ENCODE measurements at regions of chr17 and their contacts with region 1.

Region 1: DNA sequence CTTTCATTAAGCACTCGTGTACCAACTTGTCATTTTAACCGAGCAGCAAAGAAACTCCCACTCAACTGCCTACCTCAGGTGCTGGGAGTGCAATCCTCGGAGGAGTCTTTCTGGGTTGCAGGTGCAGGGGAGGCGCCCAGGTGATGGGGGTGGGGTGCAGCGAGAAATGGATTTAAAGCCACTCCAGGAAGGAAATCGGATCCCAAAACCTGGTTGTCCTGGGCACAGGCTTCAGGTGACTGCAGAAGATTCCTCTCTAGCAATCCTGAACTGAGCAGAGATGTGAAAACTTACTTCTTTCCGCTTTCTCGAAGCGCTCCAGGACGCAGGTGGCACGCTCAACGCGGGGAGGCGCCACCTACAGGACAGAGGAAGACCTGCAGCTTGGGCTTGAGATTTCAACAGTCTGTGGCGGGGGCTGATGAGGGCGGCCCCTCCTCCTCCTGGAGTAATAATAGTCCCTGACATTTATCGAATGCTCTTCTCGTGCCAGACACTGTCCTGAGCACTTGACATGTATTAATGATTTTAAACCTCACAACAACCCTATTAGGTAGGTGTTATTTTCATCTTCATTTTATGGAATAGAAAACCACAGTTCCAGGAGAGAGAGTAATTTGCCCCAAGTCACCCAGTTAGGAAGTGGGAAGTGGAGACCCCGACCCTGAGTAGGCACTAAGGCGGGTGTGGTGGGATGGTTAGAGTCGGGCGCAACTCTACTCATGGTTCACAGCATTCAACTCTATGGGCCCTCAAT is 27.2 kb upstream of the SKAP1 start:
- DNase-seq: peak; percentile 84
- H3K4me3 Mint-ChIP-seq: peak overlapping the region; percentile 54
- H3K27ac Mint-ChIP-seq: peak overlapping the region; percentile 38
- H3K4me1 Mint-ChIP-seq: peaks cover 60% of the 10 kb centered on the region
- H3K27me3 Mint-ChIP-seq: no peaks in the 10 kb centered on the region

Region 2: GRCh38 chr17:48175692-48176470 is 281.4 kb before region 1 on chr17:
- CTCF ChIA-PET with region 1: no interaction called
- POLR2A ChIA-PET with region 1: no interaction called
- intact Hi-C with region 1: no loop called
- DNase-seq: no peak
- H3K4me3 Mint-ChIP-seq: no peak overlapping the region
- H3K27ac Mint-ChIP-seq: no peak overlapping the region
- H3K4me1 Mint-ChIP-seq: peaks cover 41% of the 10 kb centered on the region
- H3K27me3 Mint-ChIP-seq: no peaks in the 10 kb centered on the region

Region 3: GRCh38 chr17:48335858-48336500 is 121.3 kb before region 1 on chr17:
- CTCF ChIA-PET with region 1: interaction called, 23 read pairs
- POLR2A ChIA-PET with region 1: no interaction called
- intact Hi-C with region 1: loop called (anchors 5 kb)
- DNase-seq: no peak
- H3K4me3 Mint-ChIP-seq: no peak overlapping the region
- H3K27ac Mint-ChIP-seq: no peak overlapping the region
- H3K4me1 Mint-ChIP-seq: peaks cover 8% of the 10 kb centered on the region
- H3K27me3 Mint-ChIP-seq: no peaks in the 10 kb centered on the region

Region 4: DNA sequence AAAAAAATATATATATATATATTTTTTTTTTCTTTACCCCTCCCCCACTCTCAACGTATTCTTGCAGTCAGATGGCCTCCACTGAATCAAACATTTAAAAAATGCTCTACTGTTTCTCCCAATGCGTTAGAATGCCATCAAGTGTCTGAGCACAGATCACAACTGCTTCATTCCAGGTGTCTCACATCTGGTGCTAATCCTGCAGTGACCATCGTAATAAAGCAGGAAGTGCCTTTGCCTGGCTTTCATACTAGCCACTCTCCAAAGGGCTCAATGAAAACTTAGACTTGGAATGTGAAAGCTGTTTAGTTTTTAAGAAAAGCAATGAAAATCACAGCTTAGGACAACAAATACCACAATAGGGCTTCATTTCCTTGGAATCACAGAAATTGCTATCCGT is 64.4 kb before region 1 on chr17:
- CTCF ChIA-PET with region 1: interaction called, 4 read pairs
- POLR2A ChIA-PET with region 1: interaction called, 3 read pairs
- intact Hi-C with region 1: loop called (anchors 2 kb)
- DNase-seq: no peak
- H3K4me3 Mint-ChIP-seq: no peak overlapping the region
- H3K27ac Mint-ChIP-seq: no peak overlapping the region
- H3K4me1 Mint-ChIP-seq: peaks cover 45% of the 10 kb centered on the region
- H3K27me3 Mint-ChIP-seq: no peaks in the 10 kb centered on the region

Region 5: GRCh38 chr17:48413613-48414405 is 43.4 kb before region 1 on chr17:
- CTCF ChIA-PET with region 1: interaction called, 13 read pairs
- POLR2A ChIA-PET with region 1: no interaction called
- intact Hi-C with region 1: loop called (anchors 1 kb)
- DNase-seq: no peak
- H3K4me3 Mint-ChIP-seq: peak overlapping the region; percentile 18
- H3K27ac Mint-ChIP-seq: peak overlapping the region; percentile 91
- H3K4me1 Mint-ChIP-seq: peaks cover 91% of the 10 kb centered on the region
- H3K27me3 Mint-ChIP-seq: no peaks in the 10 kb centered on the region

Region 6: GRCh38 chr17:48441231-48441711 is 16.0 kb before region 1 on chr17:
- CTCF ChIA-PET with region 1: interaction called, 27 read pairs
- POLR2A ChIA-PET with region 1: interaction called, 8 read pairs
- intact Hi-C with region 1: loop called (anchors 1 kb)
- DNase-seq: peak; percentile 48
- H3K4me3 Mint-ChIP-seq: peak overlapping the region; percentile 7
- H3K27ac Mint-ChIP-seq: peak overlapping the region; percentile 88
- H3K4me1 Mint-ChIP-seq: peaks cover 92% of the 10 kb centered on the region
- H3K27me3 Mint-ChIP-seq: no peaks in the 10 kb centered on the region

Region 7: GRCh38 chr17:48500966-48501426 is 43.7 kb after region 1 on chr17:
- CTCF ChIA-PET with region 1: no interaction called
- POLR2A ChIA-PET with region 1: no interaction called
- intact Hi-C with region 1: no loop called
- DNase-seq: no peak
- H3K4me3 Mint-ChIP-seq: no peak overlapping the region
- H3K27ac Mint-ChIP-seq: no peak overlapping the region
- H3K4me1 Mint-ChIP-seq: peaks cover 9% of the 10 kb centered on the region
- H3K27me3 Mint-ChIP-seq: peaks cover 2% of the 10 kb centered on the region

Region 8: DNA sequence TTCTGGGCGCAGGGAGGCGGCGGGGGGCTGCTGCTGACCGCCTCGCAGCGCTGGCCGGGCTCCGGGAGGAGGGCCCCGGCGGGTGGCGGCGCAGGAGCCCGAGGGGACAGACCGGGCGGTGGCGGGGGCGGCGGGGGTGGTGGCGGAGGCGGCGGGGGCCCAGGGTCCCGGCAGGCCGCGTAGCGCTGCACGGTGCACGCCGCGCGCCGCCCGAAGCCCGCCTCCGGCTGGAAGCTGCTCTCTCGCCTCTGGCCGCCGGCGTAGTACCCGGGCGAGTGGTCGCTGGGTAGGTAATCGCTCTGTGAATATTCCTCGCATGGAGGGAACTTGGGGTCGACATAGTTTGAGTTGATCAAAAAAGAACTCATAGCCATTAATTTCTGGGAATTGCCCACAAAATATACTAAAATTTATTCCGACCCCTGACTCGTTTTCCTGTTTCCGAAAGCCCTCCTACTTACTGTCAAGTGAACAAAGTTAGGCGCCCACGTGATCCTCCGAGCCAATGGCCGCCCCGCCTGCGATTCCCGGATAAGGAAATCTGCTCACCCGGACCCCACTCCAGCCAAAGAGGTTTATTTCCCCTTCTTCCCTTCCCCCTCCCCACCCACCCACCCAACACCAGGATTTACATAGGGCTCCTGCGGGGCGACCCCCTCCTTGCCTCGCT is 120.8 kb after region 1 on chr17 and contains the start of gene HOXB4:
- CTCF ChIA-PET with region 1: no interaction called
- POLR2A ChIA-PET with region 1: no interaction called
- intact Hi-C with region 1: no loop called
- DNase-seq: peak; percentile 82
- H3K4me3 Mint-ChIP-seq: peak within 1 kb of the TSS; percentile 80
- H3K27ac Mint-ChIP-seq: peak within 1 kb of the TSS; percentile 59
- H3K4me1 Mint-ChIP-seq: peaks cover 35% of the 10 kb centered on the region
- H3K27me3 Mint-ChIP-seq: peaks cover 42% of the 10 kb centered on the region
- total RNA-seq, gene HOXB4: 2.3 TPM

Measured in activated CD4-positive, alpha-beta memory T cell treated with anti-CD3 and anti-CD28 coated beads for 36 hours (primary cell).